ENCODE measurements at regions of chr6 and their contacts with region 1.

Region 1: DNA sequence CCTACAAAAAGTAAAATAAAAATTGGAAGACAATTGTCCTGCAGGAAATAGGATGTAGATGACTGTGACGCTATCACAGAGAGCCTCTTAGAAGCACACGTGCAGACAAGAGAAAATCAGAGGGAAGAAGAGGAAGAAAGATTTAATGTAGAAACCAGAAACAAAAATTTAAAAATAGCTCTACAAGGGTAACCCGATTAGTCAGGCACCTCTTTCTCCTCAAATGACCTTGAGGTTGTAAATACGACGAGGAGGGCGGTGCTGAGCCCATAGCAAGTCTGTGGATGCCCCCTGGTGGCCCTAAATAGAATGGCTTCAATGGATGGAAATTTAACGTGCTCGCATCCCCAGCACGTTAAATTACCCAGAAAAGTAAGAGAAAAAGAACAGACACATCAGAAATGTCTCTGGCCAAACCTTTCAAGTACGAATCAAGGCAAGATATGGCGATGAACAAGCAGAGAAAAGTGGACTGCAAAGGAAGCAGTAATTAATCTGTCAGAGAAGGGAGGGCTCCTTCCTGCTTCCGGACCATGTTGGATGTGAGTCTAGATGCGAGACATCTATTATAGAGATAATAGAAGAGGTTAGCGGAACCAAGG is 4.2 kb upstream of the PRPH2 start:
- DNase-seq: no peak
- ATAC-seq: peak; percentile 98
- H3K4me3 Mint-ChIP-seq: peak overlapping the region; percentile 89
- H3K27ac Mint-ChIP-seq: peak overlapping the region; percentile 96
- H3K4me1 Mint-ChIP-seq: peaks cover 19% of the 10 kb centered on the region
- H3K27me3 Mint-ChIP-seq: no peaks in the 10 kb centered on the region
- CTCF ChIP-seq: peak; percentile 84

Region 2: DNA sequence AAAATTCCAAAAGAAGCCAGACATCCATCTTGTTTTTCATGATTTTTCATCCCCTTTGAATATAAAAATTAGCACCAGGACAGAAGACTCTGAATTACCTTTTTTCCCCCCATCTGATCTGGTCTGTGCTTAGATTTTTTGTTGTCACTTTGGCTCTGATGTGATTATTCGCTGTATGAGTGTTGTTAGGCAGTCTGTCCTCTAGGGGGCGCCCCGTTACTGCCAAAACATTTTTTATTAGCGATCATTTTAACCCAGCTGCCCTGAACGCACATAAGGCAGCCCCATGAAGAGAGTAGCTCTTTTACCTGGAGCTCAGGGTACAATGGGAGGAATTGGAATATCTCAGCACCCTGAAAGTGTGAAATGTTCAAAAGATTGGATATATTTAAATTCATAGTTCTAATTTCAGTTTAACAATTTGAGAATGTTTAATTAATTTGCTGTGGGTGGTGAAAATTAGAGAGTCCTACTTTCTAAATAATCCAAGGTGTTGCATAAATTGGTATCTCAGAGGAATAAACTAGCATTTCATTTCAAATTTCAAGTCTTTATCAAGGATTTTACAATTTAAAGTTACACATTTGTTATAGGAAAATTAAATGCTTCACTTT is 64.9 kb before region 1 on chr6:
- CTCF ChIA-PET with region 1: interaction called, 68 read pairs
- POLR2A ChIA-PET with region 1: interaction called, 9 read pairs
- intact Hi-C with region 1: loop called (anchors 1 kb)
- DNase-seq: peak; percentile 65
- ATAC-seq: peak; percentile 96
- H3K4me3 Mint-ChIP-seq: no peak overlapping the region
- H3K27ac Mint-ChIP-seq: no peak overlapping the region
- H3K4me1 Mint-ChIP-seq: no peaks in the 10 kb centered on the region
- H3K27me3 Mint-ChIP-seq: no peaks in the 10 kb centered on the region
- CTCF ChIP-seq: peak; percentile 74

Region 3: GRCh38 chr6:42692137-42692911 is 34.3 kb before region 1 on chr6:
- CTCF ChIA-PET with region 1: interaction called, 5 read pairs
- POLR2A ChIA-PET with region 1: interaction called, 3 read pairs
- intact Hi-C with region 1: loop called (anchors 5 kb)
- DNase-seq: no peak
- ATAC-seq: no peak
- H3K4me3 Mint-ChIP-seq: no peak overlapping the region
- H3K27ac Mint-ChIP-seq: peak overlapping the region; percentile 18
- H3K4me1 Mint-ChIP-seq: peaks cover 15% of the 10 kb centered on the region
- H3K27me3 Mint-ChIP-seq: no peaks in the 10 kb centered on the region
- CTCF ChIP-seq: no peak

Region 4: GRCh38 chr6:42771741-42772100 is 45.1 kb after region 1 on chr6:
- CTCF ChIA-PET with region 1: interaction called, 4 read pairs
- POLR2A ChIA-PET with region 1: interaction called, 17 read pairs
- intact Hi-C with region 1: loop called (anchors 2 kb)
- DNase-seq: no peak
- ATAC-seq: no peak
- H3K4me3 Mint-ChIP-seq: peak overlapping the region; percentile 85
- H3K27ac Mint-ChIP-seq: peak overlapping the region; percentile 99
- H3K4me1 Mint-ChIP-seq: peaks cover 57% of the 10 kb centered on the region
- H3K27me3 Mint-ChIP-seq: no peaks in the 10 kb centered on the region
- CTCF ChIP-seq: no peak

Region 5: DNA sequence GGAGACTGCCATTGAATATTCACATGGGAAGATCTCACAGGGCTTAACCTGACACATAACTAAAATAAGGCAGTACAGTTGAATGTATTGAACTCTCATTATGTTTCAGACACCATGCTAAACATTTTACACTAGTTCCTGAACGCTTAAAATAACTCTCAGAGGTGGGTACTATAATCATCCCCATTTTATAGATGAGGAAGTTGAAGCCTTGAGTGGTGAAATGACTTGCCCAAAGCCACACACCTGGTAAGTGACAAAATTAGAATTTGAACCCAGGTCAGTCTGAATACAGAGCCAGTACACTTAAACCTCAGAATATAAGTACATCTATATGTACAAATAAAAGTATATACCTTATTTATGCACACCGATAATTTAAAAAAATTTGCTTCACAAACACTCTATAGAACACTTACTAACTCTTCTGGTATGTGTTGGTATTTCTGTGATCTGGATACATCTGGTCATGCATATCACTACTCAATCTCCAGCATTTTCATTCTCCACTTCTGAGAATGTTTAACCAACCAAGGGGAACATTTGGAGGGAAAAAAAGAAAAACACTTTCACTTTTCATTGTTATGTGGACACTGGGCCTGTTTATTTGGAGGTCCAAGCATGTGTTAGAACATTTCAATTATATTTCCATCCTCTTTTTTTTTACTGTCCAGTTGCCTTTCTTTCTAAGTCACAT is 50.7 kb after region 1 on chr6:
- CTCF ChIA-PET with region 1: no interaction called
- POLR2A ChIA-PET with region 1: interaction called, 104 read pairs
- intact Hi-C with region 1: loop called (anchors 1 kb)
- DNase-seq: no peak
- ATAC-seq: peak; percentile 15
- H3K4me3 Mint-ChIP-seq: peak overlapping the region; percentile 54
- H3K27ac Mint-ChIP-seq: peak overlapping the region; percentile 90
- H3K4me1 Mint-ChIP-seq: peaks cover 76% of the 10 kb centered on the region
- H3K27me3 Mint-ChIP-seq: no peaks in the 10 kb centered on the region
- CTCF ChIP-seq: no peak

Region 6: GRCh38 chr6:43021270-43022047 is 294.9 kb after region 1 on chr6 and contains the start of gene RRP36:
- CTCF ChIA-PET with region 1: no interaction called
- POLR2A ChIA-PET with region 1: no interaction called
- intact Hi-C with region 1: no loop called
- DNase-seq: peak; percentile 67
- ATAC-seq: peak; percentile 89
- H3K4me3 Mint-ChIP-seq: peak within 1 kb of the TSS; percentile 97
- H3K27ac Mint-ChIP-seq: peak within 1 kb of the TSS; percentile 84
- H3K4me1 Mint-ChIP-seq: peaks cover 20% of the 10 kb centered on the region
- H3K27me3 Mint-ChIP-seq: no peaks in the 10 kb centered on the region
- CTCF ChIP-seq: no peak
- total RNA-seq, gene RRP36: 51.7 and 53.9 TPM in 2 replicates